ENCODE measurements at regions of chr19 and their contacts with region 1.

Region 1: GRCh38 chr19:48970923-48971395 is 5.8 kb downstream of the FTL start:
- DNase-seq: peak; percentile 87 to 94 (median 89)
- H3K4me3 ChIP-seq: no peak overlapping the region
- H3K27ac ChIP-seq: no peak overlapping the region
- H3K4me1 ChIP-seq: peaks cover 5 to 24% (median 16%) of the 10 kb centered on the region in 4 experiments
- H3K27me3 ChIP-seq: no peaks in the 10 kb centered on the region

Region 2: DNA sequence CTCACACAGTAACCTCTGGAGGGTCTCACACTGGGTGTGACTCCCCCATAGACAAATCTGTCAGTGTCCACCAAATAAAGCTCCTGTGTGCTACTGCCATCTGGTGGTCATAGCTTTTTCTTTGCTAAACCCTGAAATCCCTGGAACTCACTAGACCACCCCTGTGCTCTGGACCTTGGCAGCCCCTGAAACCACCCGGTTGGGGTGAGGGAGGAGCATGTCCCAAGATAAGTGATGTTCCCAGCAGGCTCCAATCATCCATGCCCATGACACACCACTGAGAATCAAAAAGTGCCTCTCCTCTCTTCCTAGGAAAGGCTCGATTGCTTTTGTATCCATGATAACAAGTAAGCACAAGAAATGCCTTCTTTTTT is 128.2 kb before region 1 on chr19:
- CTCF ChIA-PET with region 1: interaction called, 13 read pairs
- POLR2A ChIA-PET with region 1: no interaction called
- DNase-seq: peak; percentile 57 to 78 (median 69)
- H3K4me3 ChIP-seq: no peak overlapping the region
- H3K27ac ChIP-seq: no peak overlapping the region
- H3K4me1 ChIP-seq: peaks cover 0 to under 1% (median 0%) of the 10 kb centered on the region in 4 experiments
- H3K27me3 ChIP-seq: no peaks in the 10 kb centered on the region

Region 3: GRCh38 chr19:48872182-48872883 is 98.6 kb before region 1 on chr19 and contains the start of gene PPP1R15A:
- CTCF ChIA-PET with region 1: interaction called, 6 read pairs
- POLR2A ChIA-PET with region 1: interaction called, 10 read pairs
- DNase-seq: peak; percentile 97 to 98 (median 98)
- H3K4me3 ChIP-seq: peak within 1 kb of the TSS; percentile 80 to 100 (median 99)
- H3K27ac ChIP-seq: peak within 1 kb of the TSS; percentile 100
- H3K4me1 ChIP-seq: peaks cover 9 to 54% (median 37%) of the 10 kb centered on the region in 4 experiments
- H3K27me3 ChIP-seq: no peaks in the 10 kb centered on the region

Region 4: DNA sequence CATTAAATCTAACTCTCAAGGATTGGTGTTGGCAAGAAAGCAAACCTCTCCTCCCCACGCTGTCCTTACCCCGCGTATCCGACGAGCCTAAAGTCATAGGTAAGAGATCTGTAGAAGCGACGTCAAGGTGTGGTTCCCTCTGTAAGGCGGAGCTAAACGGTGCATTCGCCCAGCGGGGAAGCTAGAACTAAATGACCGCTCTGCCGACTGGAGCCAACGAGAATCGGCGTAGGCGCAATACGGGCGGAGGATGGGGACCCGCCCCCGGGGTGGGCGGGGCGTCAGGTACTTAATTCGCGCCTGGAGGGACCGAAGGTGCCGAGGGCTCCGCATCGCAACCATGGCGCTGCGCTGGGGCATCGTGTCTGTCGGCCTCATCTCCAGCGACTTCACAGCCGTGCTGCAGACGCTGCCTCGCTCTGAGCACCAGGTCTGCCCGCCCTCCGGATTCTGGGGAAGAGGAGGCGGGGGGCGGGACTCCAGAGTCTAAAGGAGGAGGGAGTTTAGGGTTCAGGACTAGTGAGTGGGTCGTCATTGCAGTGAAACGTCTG is 37.5 kb before region 1 on chr19 and contains the start of gene DHDH:
- CTCF ChIA-PET with region 1: interaction called, 10 read pairs
- POLR2A ChIA-PET with region 1: interaction called, 6 read pairs
- DNase-seq: peak; percentile 60 to 80 (median 79)
- H3K4me3 ChIP-seq: peak within 1 kb of the TSS; percentile 32 to 75 (median 55)
- H3K27ac ChIP-seq: no peak within 1 kb of the TSS
- H3K4me1 ChIP-seq: peaks cover 0 to 14% (median 11%) of the 10 kb centered on the region in 4 experiments
- H3K27me3 ChIP-seq: peaks cover 0 to 11% (median 6%) of the 10 kb centered on the region in 5 experiments

Region 5: GRCh38 chr19:49017666-49018351 is 46.9 kb after region 1 on chr19:
- CTCF ChIA-PET with region 1: no interaction called
- POLR2A ChIA-PET with region 1: no interaction called
- DNase-seq: peak; percentile 63 to 83 (median 81)
- H3K4me3 ChIP-seq: peak overlapping the region; percentile 4 to 73 (median 56)
- H3K27ac ChIP-seq: no peak overlapping the region
- H3K4me1 ChIP-seq: peaks cover 0 to 24% (median 22%) of the 10 kb centered on the region in 4 experiments
- H3K27me3 ChIP-seq: peaks cover 0 to 43% (median 9%) of the 10 kb centered on the region in 5 experiments